H1 (cell line): ENCODE measurements at regions of chr5 and their contacts with region 1.

Region 1: DNA sequence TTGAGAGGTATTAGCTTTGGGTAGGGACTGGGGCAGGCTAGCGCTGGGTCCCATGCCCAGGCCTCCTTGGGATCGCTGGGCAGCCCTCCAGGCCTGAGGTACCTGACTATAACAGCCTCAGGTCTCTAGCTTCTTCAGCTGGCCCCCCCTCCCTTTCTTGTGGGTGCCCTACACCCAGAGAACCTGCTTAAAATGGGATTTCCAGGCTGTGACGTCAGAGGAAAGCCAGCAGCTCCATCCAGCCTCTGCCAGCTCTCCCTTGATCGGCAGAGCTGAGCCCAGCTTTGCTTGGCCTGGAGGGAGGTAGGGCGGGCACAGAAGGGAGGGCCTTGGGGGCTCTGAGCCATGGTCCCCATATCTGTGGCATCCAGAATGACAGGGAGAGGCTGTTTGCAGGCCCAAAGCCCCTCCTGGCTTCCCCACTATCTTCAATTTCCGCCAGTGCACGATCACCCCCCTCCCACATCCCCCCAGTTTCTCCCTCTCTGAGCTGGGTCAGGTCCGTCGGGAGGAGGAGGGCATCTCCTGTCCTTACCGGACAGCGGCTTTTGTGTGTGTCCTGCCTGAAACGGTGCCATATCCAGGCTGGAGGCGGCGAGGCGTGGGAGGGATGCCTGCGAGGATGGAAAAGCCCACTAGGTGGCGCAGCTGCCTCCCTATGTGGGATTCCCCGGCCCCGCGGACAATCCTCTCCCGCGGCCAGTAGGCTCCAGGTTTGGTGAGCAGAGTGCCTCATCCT is 10.8 kb downstream of the REEP2 start:
- DNase-seq: peak in 1 of 2 experiments; percentile 99
- H3K4me3 ChIP-seq: peak overlapping the region in 1 of 4 experiments; percentile 27; a peak in 1 of 8 replicates
- H3K27ac ChIP-seq: no peak overlapping the region
- H3K4me1 ChIP-seq: peaks cover 0 to 15% (median 7%) of the 10 kb centered on the region in 4 experiments; a peak in 5 of 7 replicates
- H3K27me3 ChIP-seq: peaks cover 0 to 1% (median 0%) of the 10 kb centered on the region in 4 experiments; a peak in 1 of 7 replicates
- CTCF ChIP-seq: peak in 2 of 3 experiments; percentile 95 to 97; a peak in 3 of 4 replicates
- EP300 ChIP-seq: no peak
- POLR2A ChIP-seq: no peak
- RAD21 ChIP-seq: peak; percentile 83 to 88

Region 2: DNA sequence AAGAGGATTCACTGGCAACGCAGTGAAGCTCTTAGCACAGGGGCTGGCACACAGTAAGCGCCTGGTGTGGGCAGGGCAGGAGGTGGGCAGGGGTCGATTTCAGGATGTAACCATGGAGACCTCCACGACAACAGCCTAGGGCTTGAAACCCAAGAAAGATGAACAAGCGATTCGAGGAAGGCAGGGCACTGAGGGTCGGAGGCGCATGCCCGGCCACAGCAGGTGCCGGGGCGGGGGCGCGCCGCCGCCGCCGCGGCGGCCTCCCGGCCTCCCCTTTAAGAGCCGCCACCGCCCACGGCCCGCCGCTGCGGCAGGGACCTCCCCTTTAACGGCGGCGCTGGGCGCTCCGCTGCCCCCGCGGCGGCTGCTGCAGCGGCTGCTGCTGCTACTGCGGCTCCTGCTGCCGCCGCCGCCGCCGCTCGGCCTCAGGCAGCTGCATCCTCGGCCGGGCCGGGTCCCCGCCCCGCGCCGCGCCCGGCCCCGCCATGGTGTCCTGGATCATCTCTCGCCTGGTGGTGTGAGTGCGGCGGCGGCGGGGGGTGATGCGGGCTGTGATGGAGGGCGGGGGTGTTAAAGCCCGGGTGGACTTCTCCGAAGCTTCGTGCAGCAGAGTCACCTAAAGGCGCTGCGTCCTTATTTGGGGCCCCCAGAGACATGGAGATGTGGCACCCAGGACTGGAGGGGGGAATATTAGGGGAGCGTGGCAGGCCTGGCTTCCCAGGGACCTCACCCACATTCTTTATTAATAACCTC is 10.8 kb before region 1 on chr5 and contains the start of gene REEP2:
- CTCF ChIA-PET with region 1: interaction called, 34 read pairs
- POLR2A ChIA-PET with region 1: interaction called, 22 read pairs
- DNase-seq: peak; percentile 34 to 72
- H3K4me3 ChIP-seq: peak within 1 kb of the TSS; percentile 74 to 98 (median 84)
- H3K27ac ChIP-seq: no peak within 1 kb of the TSS
- H3K4me1 ChIP-seq: peaks cover 0 to 20% (median 14%) of the 10 kb centered on the region in 4 experiments; a peak in 6 of 7 replicates
- H3K27me3 ChIP-seq: no peaks in the 10 kb centered on the region
- CTCF ChIP-seq: no peak
- EP300 ChIP-seq: peak in 1 of 2 experiments; percentile 85; a peak in 1 of 3 replicates
- POLR2A ChIP-seq: no peak
- RAD21 ChIP-seq: no peak
- total RNA-seq, gene REEP2: 40.2 and 41.4 TPM in 2 replicates

Region 3: DNA sequence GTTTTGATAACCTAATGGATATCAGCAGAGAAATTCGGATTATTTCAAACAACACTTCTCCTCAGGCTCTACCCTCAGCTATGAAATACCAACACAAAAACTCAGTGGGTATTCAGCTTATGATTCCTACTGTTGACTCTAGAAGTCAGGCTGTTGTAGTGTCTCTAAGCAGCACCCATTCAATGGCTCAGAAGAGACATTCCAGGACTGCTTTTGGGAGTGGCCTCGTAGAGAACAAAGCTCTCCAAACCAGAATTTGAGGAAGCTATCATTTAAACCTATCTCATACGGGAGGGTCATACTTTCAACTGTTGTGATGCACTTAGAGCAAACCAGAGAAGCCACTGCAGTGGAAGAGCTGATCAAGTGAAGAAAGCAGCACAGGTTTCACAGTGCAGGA is 59.3 kb after region 1 on chr5:
- CTCF ChIA-PET with region 1: interaction called, 532 read pairs
- POLR2A ChIA-PET with region 1: interaction called, 28 read pairs
- DNase-seq: no peak
- H3K4me3 ChIP-seq: no peak overlapping the region
- H3K27ac ChIP-seq: no peak overlapping the region
- H3K4me1 ChIP-seq: no peaks in the 10 kb centered on the region
- H3K27me3 ChIP-seq: no peaks in the 10 kb centered on the region
- CTCF ChIP-seq: no peak
- EP300 ChIP-seq: no peak
- POLR2A ChIP-seq: no peak
- RAD21 ChIP-seq: no peak

Region 4: GRCh38 chr5:138536665-138537315 is 87.1 kb after region 1 on chr5:
- CTCF ChIA-PET with region 1: interaction called, 4 read pairs
- POLR2A ChIA-PET with region 1: interaction called, 11 read pairs
- DNase-seq: peak in 1 of 2 experiments; percentile 43
- H3K4me3 ChIP-seq: no peak overlapping the region
- H3K27ac ChIP-seq: no peak overlapping the region
- H3K4me1 ChIP-seq: peaks cover 0 to 7% (median 0%) of the 10 kb centered on the region in 4 experiments; a peak in 2 of 7 replicates
- H3K27me3 ChIP-seq: no peaks in the 10 kb centered on the region
- CTCF ChIP-seq: peak; percentile 18 to 62 (median 41)
- EP300 ChIP-seq: no peak
- POLR2A ChIP-seq: peak in 1 of 2 experiments; percentile 74; a peak in 1 of 3 replicates
- RAD21 ChIP-seq: no peak

Region 5: DNA sequence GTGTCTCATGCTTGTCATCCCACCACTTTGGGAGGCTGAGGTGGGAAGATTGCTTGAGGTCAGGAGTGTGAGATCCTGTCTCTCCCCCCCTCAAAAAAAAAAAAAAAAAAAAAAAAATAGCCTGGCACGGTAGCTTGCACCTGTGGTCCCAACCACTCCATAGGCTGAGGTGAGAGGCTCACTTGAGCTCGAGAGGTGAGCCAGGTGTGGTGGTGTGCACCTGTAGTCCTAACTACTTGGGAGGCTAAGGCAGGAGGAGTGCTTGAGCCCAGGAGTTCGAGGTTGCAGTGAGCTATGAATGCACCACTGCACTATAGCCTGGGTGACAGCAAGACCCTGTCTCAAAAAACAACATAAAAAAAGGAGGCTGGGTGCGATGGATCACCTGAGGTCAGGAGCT is 103.0 kb after region 1 on chr5:
- CTCF ChIA-PET with region 1: interaction called, 13 read pairs
- POLR2A ChIA-PET with region 1: no interaction called
- DNase-seq: no peak
- H3K4me3 ChIP-seq: no peak overlapping the region
- H3K27ac ChIP-seq: no peak overlapping the region
- H3K4me1 ChIP-seq: no peaks in the 10 kb centered on the region
- H3K27me3 ChIP-seq: no peaks in the 10 kb centered on the region
- CTCF ChIP-seq: no peak
- EP300 ChIP-seq: no peak
- POLR2A ChIP-seq: no peak
- RAD21 ChIP-seq: no peak